Activated naive CD4-positive, alpha-beta T cell treated with anti-CD3 and anti-CD28 coated beads, Interleukin-2, amount 10 ng/mL, durations not matched to agents 7 days and 5 days (primary cell): ENCODE measurements at regions of chr7 and their contacts with region 1.

Region 1: DNA sequence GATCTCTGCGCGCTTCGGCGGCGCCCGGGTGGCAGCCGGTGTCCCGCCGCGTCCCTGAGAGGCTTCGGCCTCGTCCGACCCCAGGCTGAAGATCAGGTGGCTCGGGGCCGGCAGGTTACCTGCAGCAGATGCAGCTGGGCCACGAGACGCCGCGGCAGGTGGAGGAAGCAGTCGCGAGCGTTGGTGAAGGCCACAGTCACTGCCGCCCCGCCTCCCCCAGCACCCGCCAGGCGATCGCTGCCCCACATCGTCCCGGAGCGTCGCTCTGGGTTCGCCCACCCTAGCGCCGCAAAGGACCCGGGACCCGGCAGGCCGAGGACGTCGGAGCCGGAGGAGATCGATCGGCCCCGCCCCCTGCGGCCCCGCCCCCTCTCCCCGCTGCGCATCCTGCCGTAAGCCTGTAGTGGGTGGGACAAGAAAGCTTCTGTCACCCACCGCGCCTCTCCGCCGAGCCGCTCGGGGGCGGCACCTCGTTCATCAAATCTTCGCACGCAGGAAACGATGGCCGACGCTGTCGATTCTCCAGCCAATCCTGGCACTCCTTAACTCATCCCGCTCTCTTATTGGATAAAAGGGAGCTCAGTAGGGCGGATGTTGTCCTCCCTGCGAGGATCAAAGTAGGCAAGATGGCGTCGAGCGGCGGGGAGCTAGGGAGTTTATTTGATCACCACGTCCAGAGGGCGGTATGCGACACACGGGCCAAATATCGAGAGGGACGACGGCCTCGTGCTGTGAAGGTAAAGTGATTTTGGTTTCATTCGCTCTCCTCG is at the starts of genes PEX1 and RBM48:
- DNase-seq: peak; percentile 96
- H3K4me3 Mint-ChIP-seq: peak within 1 kb of the TSS; percentile 83
- H3K27ac Mint-ChIP-seq: peak within 1 kb of the TSS; percentile 97
- H3K4me1 Mint-ChIP-seq: peaks cover 41% of the 10 kb centered on the region
- H3K27me3 Mint-ChIP-seq: no peaks in the 10 kb centered on the region

Region 2: DNA sequence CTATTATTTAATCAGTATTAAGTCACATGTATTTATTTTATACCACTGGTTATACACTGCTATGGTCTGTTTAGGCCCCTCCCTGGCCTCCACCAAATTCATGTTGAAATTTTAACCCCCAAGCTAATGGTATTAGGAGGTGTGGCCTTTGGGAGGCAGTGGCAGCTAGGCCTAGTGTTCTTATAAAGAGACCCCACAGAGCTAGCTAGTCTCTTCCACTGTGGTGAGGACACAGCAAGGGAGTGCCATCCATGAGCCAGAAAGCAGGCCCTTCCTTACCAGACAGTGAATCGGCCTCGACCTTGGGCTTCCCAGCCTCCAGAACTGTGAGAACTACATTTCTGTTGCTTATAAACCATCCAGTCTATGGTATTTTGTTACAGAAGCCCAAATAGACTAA is 28.9 kb after region 1 on chr7:
- CTCF ChIA-PET with region 1: no interaction called
- DNase-seq: no peak
- H3K4me3 Mint-ChIP-seq: no peak overlapping the region
- H3K27ac Mint-ChIP-seq: no peak overlapping the region
- H3K4me1 Mint-ChIP-seq: no peaks in the 10 kb centered on the region
- H3K27me3 Mint-ChIP-seq: peaks cover 3% of the 10 kb centered on the region

Region 3: DNA sequence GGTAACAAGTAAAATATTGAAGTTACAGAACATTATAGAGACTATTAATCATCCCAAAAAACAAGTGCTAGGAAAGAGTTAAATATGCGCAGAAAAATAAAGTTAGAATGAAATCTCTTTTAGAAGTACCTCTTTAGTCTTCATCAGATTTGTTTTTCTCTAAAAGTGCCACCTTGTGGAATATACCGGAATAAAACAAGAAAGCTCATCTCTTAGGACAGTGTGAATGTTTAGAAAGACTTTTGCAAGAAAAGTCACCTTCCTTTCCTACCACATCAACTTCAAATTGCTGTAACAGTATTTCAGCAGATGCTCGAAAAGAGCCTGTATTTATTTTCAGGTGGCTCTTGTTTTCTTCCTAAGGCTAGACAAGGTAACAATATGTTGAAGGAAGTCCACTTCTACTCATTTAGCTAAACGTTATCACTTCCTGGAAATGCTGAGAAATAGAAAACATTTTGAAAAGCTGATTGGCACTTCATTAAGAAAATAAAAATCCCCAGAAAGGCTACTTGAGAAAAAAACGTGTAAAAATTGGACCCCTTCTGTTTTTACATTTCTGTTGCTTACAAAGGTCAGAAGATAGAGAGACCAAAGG is 81.6 kb after region 1 on chr7:
- CTCF ChIA-PET with region 1: interaction called, 10 read pairs
- DNase-seq: no peak
- H3K4me3 Mint-ChIP-seq: no peak overlapping the region
- H3K27ac Mint-ChIP-seq: peak overlapping the region; percentile 58
- H3K4me1 Mint-ChIP-seq: peaks cover 22% of the 10 kb centered on the region
- H3K27me3 Mint-ChIP-seq: no peaks in the 10 kb centered on the region